Aorta (tissue), 5 donors: ENCODE measurements at regions of chr1 and their contacts with region 1.

Region 1: GRCh38 chr1:39110325-39110851 is 84.2 kb downstream of the NDUFS5 start:
- DNase-seq: no peak
- ATAC-seq: peak; percentile 72
- H3K4me3 ChIP-seq: no peak overlapping the region
- H3K27ac ChIP-seq: peak overlapping the region; percentile 73 to 90
- H3K4me1 ChIP-seq: peaks cover 7 to 8% of the 10 kb centered on the region in 2 donors
- H3K27me3 ChIP-seq: no peaks in the 10 kb centered on the region

Region 2: GRCh38 chr1:39154553-39155421 is 44.4 kb after region 1 on chr1:
- intact Hi-C with region 1: loop called (anchors 2 to 5 kb)
- DNase-seq: peak in 1 of 2 donors; percentile 62
- ATAC-seq: peak; percentile 85
- H3K4me3 ChIP-seq: no peak overlapping the region
- H3K27ac ChIP-seq: peak overlapping the region in 1 of 2 donors; percentile 54
- H3K4me1 ChIP-seq: peaks cover 25 to 30% of the 10 kb centered on the region in 2 donors
- H3K27me3 ChIP-seq: no peaks in the 10 kb centered on the region

Region 3: DNA sequence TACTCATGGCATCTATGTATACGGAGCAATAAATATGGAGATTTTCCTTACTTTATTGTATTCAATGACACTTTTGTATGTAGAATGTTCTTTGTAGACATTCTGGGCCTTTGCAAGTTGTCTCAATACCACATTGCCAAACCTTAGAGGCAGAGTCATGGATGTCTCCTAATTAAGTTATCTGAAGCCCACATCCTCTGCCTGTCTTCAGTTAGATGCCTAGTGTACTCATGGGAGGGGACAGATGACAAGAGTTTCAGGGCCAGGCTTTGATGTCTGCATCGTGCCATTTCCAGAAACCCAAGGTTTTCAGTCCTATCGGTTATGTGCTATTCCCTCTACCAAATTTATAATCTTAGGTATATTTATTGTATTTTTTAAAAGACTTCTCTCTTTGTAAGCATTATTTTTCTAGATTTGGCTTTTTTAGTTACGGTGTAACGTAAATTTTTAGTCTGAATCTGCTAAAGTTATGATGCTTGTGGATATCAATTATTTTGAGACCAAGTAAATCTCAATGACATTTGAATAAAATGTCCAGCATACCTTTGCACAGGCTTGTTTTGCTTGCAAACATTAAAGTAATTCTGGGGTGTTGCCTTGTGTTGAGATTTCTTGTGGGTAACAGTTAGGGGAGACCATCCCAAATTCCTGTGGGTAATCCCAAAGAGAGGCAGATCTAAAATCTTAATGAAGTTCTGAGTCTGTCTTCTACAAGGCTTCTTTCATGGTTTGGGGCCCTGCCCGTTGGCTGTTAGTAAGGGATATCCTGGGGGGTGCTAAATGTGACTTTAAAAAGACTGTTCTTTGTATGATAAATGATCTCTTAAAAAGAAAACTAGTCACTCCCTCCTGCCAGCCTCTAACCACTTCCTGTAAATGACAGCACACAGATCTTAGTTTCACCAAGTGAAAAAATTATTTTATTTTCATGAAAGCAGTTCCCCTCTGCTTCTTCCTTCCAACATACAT is 86.1 kb after region 1 on chr1:
- intact Hi-C with region 1: loop called (anchors 2 to 5 kb)
- DNase-seq: no peak
- ATAC-seq: no peak
- H3K4me3 ChIP-seq: no peak overlapping the region
- H3K27ac ChIP-seq: peak overlapping the region; percentile 64 to 82
- H3K4me1 ChIP-seq: peaks cover 2 to 10% of the 10 kb centered on the region in 2 donors
- H3K27me3 ChIP-seq: no peaks in the 10 kb centered on the region

Region 4: GRCh38 chr1:39378377-39378776 is 268.0 kb after region 1 on chr1:
- intact Hi-C with region 1: no loop called
- DNase-seq: no peak
- ATAC-seq: no peak
- H3K4me3 ChIP-seq: no peak overlapping the region
- H3K27ac ChIP-seq: peak overlapping the region; percentile 36
- H3K4me1 ChIP-seq: no peaks in the 10 kb centered on the region
- H3K27me3 ChIP-seq: no peaks in the 10 kb centered on the region